ENCODE measurements at regions of chrX and their contacts with region 1.

Region 1: GRCh38 chrX:130190801-130191200 is 19.0 kb downstream of the RAB33A start:
- DNase-seq: no peak

Region 2: GRCh38 chrX:129996120-129996519 is 194.7 kb before region 1 on chrX:
- intact Hi-C with region 1: no loop called
- DNase-seq: no peak

Region 3: DNA sequence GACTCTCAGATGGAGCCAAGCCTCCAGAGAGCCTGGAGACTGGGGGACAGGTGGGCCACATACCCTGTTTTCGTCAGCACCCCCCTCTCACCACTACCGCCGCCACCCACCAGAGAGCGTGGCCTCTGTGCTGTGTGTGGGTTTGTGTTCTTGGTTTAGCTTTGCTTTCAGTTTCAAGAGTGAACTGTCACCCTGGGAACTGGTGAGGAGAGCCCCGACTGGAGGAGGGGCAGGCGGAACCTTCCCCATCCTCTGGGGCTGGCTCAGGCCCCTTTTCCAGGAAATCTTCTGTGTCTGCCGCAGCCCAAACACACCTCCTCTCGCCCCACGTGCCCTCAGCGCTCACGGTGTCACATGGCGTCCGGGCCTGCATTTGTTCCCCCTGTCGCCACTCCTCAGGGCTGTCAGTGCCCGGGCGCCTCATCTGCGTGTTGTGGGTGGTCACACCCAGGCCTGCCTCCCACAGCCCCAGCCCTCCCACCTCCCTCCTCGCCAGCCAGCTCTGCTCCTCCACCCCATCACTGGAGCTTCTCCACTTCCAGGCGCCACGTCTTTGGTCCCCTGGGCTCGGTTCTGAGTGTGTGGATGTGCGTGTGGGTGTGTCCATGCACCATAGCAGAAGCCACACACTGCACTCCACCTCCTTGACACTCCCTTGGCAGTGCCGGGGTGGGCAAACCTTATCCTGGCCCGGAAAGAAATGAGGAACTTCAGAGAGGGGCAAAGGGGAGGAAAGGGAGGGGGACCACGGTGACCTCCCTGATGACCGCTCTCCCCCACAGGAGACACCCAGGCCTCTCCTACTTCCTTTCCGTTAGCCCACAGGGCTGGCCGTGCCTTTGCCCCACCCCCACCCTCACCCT is 108.3 kb before region 1 on chrX:
- intact Hi-C with region 1: loop called (anchors 2 kb)
- DNase-seq: peak in 15 of 42 donors; percentile 4 to 58 (median 14)